ENCODE measurements at regions of chr2 and their contacts with region 1.

Region 1: DNA sequence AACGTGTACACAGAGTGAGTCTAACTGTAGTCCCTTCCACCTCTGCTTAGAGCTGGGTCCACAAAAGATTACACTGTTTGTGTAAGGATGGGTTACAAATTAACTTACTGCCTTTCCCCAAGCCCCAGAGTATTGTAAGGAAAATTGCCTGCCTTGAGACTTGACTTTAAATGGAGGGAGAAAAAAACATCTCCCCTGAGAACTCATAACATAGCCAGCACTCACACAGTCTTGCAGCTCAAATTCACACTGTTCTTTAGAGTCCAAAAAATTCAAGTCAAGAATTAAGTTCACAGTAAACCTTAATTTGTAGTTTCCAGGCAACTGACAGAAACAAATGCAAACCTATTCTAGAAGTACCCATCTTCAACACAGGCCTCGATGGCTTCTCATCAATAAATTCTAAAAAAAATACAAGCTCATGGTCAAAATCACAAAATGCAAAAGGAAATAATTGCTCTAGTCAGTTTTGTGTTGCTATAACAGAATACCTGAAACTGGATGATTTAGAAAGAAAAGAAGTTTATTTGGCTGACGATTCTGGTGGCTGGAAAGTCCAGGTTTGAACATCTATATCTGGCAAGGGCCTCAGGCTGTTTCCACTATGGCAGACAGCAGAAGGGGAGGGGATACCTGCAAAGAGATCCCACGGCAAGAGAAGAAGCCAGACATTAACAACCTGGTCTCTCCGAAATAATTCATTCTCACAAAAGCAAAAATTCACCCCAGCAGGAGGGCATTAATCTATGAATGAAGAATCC is 34.6 kb upstream of the TMEM17 start:
- DNase-seq: peak; percentile 94
- ATAC-seq: peak; percentile 98
- H3K4me3 ChIP-seq: peak overlapping the region in 1 of 3 experiments; percentile 8; a peak in 1 of 6 replicates
- H3K27ac ChIP-seq: peak overlapping the region; percentile 84
- H3K4me1 ChIP-seq: peaks cover 69% of the 10 kb centered on the region
- H3K27me3 ChIP-seq: no peaks in the 10 kb centered on the region
- CTCF ChIP-seq: no peak
- EP300 ChIP-seq: peak in 1 of 2 experiments; percentile 82; a peak in 2 of 4 replicates
- POLR2A ChIP-seq: peak in 1 of 2 experiments; percentile 35; a peak in 1 of 4 replicates
- RAD21 ChIP-seq: peak; percentile 19; the same call in 1 of the 2 replicates

Region 2: GRCh38 chr2:62565309-62565908 is 24.8 kb after region 1 on chr2:
- CTCF ChIA-PET with region 1: no interaction called
- POLR2A ChIA-PET with region 1: interaction called, 106 read pairs
- in situ Hi-C with region 1: no loop called
- intact Hi-C with region 1: loop called (anchors 2 kb)
- DNase-seq: peak; percentile 66
- ATAC-seq: no peak
- H3K4me3 ChIP-seq: no peak overlapping the region
- H3K27ac ChIP-seq: peak overlapping the region; percentile 55
- H3K4me1 ChIP-seq: peaks cover 72% of the 10 kb centered on the region
- H3K27me3 ChIP-seq: no peaks in the 10 kb centered on the region
- CTCF ChIP-seq: no peak
- EP300 ChIP-seq: peak in 1 of 2 experiments; percentile 55; a peak in 1 of 4 replicates
- POLR2A ChIP-seq: no peak
- RAD21 ChIP-seq: no peak

Measured in HepG2 (cell line).